ENCODE measurements at regions of chr13 and their contacts with region 1.

Region 1: GRCh38 chr13:83881917-83882605 is at the start of gene SLITRK1:
- DNase-seq: no peak
- H3K4me3 Mint-ChIP-seq: no peak within 1 kb of the TSS
- H3K27ac Mint-ChIP-seq: no peak within 1 kb of the TSS
- H3K4me1 Mint-ChIP-seq: no peaks in the 10 kb centered on the region
- H3K27me3 Mint-ChIP-seq: peaks cover 47% of the 10 kb centered on the region
- total RNA-seq, gene SLITRK1: not detected in 2 replicates

Region 2: DNA sequence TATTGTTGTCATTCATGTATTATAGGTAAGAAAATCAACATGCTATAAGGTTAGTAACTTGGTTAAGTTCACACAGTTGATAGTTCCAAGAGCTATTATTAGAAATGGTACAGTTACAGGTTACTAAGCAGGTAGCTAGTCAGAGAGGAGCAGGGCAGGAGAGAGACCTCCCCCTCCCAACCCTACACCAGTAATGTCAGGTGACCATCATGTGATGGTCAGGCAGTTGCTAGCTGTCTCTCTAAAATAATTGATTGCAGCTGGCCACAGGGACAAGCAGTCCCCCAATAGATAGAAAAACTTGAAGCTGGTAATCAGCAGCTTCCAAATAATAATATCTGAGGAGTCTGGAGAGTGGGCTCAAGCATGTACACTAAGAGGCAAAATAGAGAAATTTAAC is 14.4 kb before region 1 on chr13:
- intact Hi-C with region 1: no loop called
- DNase-seq: no peak
- H3K4me3 Mint-ChIP-seq: no peak overlapping the region
- H3K27ac Mint-ChIP-seq: no peak overlapping the region
- H3K4me1 Mint-ChIP-seq: no peaks in the 10 kb centered on the region
- H3K27me3 Mint-ChIP-seq: no peaks in the 10 kb centered on the region

Region 3: DNA sequence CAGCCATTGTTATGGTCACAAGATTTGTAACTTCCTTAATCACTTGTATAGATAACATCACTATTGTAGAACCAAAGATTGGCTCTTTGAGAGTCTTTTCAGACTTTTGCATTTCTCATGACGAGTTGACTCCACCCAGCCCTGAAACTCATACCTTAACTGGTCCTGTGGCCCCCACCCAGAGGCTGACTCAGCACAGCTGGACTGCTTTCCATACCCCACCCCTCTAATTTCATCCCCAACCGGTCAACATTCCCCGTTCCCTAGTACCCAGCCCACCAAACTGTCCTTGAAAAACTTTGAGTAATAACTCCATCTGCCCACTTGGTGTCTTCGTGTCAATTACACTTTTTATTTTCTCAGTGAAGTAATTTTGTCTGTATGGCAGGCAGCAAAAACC is 32.3 kb after region 1 on chr13:
- intact Hi-C with region 1: no loop called
- DNase-seq: no peak
- H3K4me3 Mint-ChIP-seq: no peak overlapping the region
- H3K27ac Mint-ChIP-seq: no peak overlapping the region
- H3K4me1 Mint-ChIP-seq: no peaks in the 10 kb centered on the region
- H3K27me3 Mint-ChIP-seq: no peaks in the 10 kb centered on the region

Region 4: GRCh38 chr13:84137292-84137691 is 255.2 kb after region 1 on chr13:
- intact Hi-C with region 1: loop called (anchors 10 kb)
- DNase-seq: peak; percentile 52
- H3K4me3 Mint-ChIP-seq: peak overlapping the region; percentile 47
- H3K27ac Mint-ChIP-seq: peak overlapping the region; percentile 57
- H3K4me1 Mint-ChIP-seq: peaks cover 17% of the 10 kb centered on the region
- H3K27me3 Mint-ChIP-seq: no peaks in the 10 kb centered on the region

Measured in activated T-helper 2 cell treated with anti-CD3 and anti-CD28 coated beads, Interferon-gamma antibody, Interleukin-2, Interleukin-4, amounts not matched to agents 10 μg/mL and 5 μg/mL and 100 μg/mL, durations not matched to agents 14 hours and 24 hours and 36 hours (primary cell).